Astrocyte of the cerebellum (primary cell): ENCODE measurements at regions of chr17 and their contacts with region 1.

Region 1: GRCh38 chr17:81142301-81143199 is 22.8 kb upstream of the PVALEF start:
- DNase-seq: peak; percentile 33
- H3K4me3 ChIP-seq: no peak overlapping the region
- CTCF ChIP-seq: peak; percentile 69

Region 2: DNA sequence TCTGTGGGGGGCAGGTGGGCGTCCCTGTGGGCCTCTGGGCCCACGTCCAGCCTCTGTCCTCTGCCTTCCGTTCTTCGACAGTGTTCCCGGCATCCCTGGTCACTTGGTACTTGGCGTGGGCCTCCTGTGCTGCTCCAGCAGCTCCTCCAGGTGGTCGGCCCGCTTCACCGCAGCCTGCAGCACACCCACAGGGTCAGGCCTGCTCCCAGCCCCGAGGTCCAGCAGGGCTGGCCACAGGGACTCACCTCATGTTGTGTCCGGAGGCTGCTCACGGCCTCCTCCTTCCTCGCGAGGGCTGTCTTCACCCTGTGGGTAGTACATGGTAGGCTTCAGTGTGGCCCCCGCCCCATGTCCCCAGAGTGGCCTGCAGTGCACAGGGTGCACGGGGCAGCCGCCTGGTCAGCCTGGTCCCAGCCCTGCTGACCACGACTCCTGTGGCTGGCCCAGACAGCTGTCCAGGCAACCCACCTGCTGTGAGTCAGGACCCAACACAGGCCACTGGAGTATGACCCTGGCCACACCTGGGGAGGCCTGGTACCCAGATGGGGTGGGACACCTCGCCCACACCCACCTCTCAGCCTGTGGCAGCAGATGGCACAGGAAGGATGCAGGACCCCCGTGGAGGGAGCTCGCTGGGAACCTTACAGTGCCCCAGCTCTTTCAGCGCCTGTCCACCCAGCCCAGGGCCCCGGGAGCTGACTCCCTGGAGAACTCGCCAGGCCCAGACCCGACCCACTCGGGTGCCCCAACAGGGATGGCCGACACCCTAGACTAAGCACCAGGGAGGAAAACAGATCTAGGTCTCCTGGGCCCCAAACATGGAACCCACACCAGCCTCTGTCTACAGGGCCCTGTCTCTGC is 47.4 kb after region 1 on chr17:
- in situ Hi-C with region 1: loop called (anchors 5 kb)
- DNase-seq: no peak
- H3K4me3 ChIP-seq: no peak overlapping the region
- CTCF ChIP-seq: peak; percentile 22